Cardiac septum (tissue), 1 donor: ENCODE measurements at regions of chr2 and their contacts with region 1.

Region 1: DNA sequence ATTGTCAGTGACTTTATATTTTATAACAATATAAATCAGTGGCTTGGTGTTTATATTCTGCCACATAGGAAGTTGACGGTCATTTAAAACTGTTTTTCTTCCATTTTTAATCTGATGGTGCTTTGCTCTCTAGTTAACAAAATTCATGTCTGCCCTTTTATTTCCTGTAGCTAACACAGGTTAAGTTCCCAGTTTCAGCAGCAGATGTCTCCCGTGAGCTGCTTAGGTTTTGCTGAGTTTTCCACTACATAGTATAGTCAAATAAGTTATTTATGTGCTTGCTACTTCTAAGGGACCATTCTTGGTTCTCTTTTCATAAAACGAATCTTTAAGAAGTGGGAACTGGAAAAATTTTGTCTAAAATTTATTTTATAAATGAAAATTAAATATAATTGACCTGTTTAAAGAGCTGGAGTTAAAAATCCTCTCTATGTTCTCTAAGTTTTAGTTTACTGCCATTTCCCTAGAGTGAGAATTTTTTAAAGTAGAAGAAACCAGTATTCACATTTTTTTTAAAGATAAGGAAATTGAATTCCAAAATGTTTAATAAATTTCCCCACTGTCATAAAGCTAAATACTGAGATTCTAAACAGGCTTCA is 20.6 kb downstream of the HTR2B start:
- DNase-seq: no peak

Region 2: GRCh38 chr2:230924470-230925341 is 179.5 kb before region 1 on chr2 and contains the start of gene GPR55:
- intact Hi-C with region 1: no loop called
- DNase-seq: peak; percentile 71
- total RNA-seq, gene GPR55: not detected

Region 3: GRCh38 chr2:231191896-231192872 is 88.0 kb after region 1 on chr2:
- intact Hi-C with region 1: loop called (anchors 5 kb)
- DNase-seq: peak; percentile 85

Region 4: DNA sequence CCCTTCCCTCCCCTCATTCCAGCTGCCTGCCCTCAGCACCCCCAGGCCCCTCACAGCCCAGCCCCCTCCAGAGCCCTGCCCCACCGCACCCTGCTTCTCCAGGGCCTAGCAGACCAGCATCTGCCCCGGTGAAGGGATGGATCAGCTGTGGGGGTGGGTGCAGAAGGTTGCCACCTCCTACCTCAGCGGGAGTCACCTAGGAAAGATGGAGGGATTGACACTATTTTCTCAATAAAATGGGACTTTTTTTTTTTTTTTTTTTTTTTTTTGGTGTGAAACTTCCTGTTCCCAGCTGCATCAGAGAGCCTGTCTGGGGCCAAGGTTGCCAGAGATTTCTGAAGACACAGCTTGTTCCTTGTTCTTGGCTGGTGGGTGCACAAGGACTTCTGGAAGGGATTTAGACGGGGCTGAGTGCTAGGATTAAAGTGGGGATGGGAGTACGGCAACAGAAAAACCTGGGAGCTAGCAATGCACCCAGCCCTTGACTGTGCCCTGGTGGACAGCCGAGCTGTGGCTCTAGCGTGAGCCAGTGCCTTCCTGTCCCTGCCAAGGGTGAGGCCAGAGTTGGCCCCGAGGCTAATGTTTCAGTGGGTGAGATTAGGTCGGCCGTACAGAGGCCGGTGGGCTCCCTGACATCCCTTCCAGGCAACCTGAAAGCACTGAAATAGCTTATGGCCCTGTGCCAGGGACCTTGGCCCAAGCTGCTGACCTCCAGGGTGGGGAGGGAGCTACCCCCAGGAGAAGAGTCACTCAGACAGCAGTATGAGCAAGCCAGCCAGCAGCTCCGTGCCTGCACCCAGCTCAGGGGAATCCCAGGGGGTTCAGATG is 295.9 kb after region 1 on chr2:
- intact Hi-C with region 1: no loop called
- DNase-seq: no peak

Region 5: DNA sequence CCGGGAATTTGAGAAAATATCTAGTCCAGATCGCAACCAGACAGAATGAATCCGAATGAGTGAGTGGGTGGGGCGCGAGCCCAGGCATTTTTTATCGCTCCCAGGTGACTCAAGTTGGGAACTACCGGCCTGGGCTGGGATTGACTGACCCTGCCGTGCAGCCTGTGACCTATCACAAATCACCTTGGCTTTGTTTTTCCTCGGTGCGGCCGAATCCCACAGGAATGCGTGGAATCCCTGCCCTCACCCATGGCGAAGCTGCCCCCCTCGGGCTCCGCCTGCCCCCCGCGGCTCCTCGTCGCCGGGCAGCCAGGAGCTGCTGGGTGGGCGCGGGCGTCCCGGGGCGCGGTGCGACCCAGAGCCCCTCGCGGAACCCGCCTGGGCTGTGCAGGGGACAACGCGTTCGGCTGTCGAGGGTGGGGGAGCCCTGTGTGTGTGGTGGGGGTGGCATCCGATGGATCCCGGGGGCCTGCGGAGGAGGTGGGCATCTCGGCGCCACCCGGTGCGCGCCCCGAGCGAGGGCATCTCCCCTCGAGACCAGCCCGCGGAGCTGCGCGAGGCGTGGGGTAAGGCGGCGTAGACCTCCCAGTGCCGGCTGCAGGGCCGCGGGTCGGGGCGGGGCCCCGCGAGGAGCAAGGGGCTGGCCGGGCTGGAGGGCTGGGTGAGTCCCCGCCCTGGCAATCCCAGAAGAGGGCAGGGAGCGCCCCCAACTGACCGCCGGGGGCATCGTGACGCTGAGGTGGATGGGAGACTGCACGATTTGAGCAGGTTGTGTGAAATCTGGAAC is 307.8 kb after region 1 on chr2:
- intact Hi-C with region 1: loop called (anchors 2 kb)
- DNase-seq: peak; percentile 87

Region 6: GRCh38 chr2:231452799-231453508 is 348.7 kb after region 1 on chr2:
- intact Hi-C with region 1: loop called (anchors 5 kb)
- DNase-seq: no peak